PC-3 (cell line): ENCODE measurements at regions of chr4 and their contacts with region 1.

Region 1: DNA sequence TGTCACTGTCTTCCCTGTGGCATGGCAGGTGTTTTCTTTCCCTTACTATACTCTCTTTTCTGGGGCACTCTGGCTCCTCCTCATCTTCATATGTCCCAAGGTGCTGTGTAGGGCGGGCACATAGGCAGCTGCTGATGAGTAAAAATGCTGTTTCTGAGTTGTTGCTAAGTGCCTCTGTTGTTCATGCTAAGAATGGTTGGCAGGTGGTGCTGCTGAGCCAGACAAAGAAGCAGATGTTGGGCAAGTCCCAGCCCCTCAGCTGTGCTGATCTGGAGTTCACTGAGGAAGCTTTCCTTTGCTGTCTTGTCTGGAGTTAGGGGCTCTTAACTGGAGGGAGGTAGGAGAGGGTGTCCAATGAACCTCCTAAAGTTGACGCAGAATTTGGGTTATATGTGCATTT is 40.6 kb downstream of the HADH start:
- DNase-seq: peak; percentile 39
- ATAC-seq: peak; percentile 92
- H3K4me3 ChIP-seq: no peak overlapping the region
- H3K27ac ChIP-seq: no peak overlapping the region
- H3K4me1 ChIP-seq: no peaks in the 10 kb centered on the region
- H3K27me3 ChIP-seq: no peaks in the 10 kb centered on the region
- CTCF ChIP-seq: peak; percentile 60

Region 2: GRCh38 chr4:106594291-106594952 is 1435.9 kb before region 1 on chr4:
- CTCF ChIA-PET with region 1: no interaction called
- POLR2A ChIA-PET with region 1: no interaction called
- intact Hi-C with region 1: loop called (anchors 10 kb)
- DNase-seq: peak; percentile 11
- ATAC-seq: no peak
- H3K4me3 ChIP-seq: no peak overlapping the region
- H3K27ac ChIP-seq: no peak overlapping the region
- H3K4me1 ChIP-seq: no peaks in the 10 kb centered on the region
- H3K27me3 ChIP-seq: no peaks in the 10 kb centered on the region
- CTCF ChIP-seq: no peak

Region 3: DNA sequence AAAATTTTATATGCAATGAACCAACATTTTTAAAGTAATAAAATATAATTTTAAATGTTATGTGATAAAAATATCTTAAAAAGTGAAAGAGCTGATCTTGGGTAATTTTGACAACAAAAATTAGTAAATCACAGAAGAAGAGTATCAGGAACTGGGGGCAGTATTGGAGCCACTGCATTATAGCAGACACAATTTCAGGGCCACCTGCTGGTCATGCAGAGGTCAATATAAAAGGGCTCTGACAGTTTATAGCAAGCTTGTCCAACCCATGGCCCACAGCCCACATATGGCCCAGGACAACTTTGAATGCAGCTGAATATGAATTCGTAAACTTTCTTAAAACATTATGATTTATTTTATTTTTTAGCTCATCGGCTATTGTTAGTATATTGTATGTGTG is 151.4 kb after region 1 on chr4:
- CTCF ChIA-PET with region 1: no interaction called
- POLR2A ChIA-PET with region 1: no interaction called
- intact Hi-C with region 1: loop called (anchors 5 kb)
- DNase-seq: no peak
- ATAC-seq: peak; percentile 58
- H3K4me3 ChIP-seq: no peak overlapping the region
- H3K27ac ChIP-seq: no peak overlapping the region
- H3K4me1 ChIP-seq: no peaks in the 10 kb centered on the region
- H3K27me3 ChIP-seq: no peaks in the 10 kb centered on the region
- CTCF ChIP-seq: peak; percentile 35

Region 4: DNA sequence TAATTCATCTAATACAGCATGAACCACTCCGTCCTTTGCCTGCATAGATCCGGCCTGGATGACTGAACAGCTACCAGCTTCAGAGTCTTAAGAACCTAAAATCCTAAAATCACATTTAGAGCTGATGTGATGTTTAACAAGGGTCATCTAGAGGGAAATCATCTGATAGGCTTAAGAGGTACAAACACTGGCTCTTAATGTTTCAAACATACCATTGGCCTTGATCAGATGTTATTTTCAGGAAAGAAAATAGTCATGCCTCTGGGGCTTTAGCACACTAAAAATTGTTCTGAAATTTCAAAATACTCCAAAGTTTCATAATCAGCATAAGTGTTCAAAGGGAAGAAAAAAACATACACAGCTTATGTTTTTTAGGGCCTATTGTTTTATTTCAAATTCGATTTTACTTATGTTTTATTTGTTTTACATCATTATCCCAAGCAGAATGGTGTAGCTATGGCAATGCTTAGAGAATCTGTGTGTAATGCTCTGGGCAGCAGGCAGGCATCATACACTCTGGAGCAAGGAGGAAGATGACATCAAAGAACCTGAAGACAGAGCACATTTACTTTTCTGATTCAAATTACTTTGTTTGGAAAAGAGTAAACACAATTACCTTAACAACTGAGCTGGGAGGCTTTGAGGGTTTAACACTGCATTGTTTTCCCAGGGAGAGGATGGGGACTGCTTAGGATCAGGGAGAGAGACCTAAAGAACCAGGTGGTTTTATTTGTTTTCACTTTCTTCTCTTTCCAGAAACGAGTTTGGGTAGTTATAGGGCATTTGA is 163.7 kb after region 1 on chr4:
- CTCF ChIA-PET with region 1: no interaction called
- POLR2A ChIA-PET with region 1: no interaction called
- intact Hi-C with region 1: no loop called
- DNase-seq: no peak
- ATAC-seq: no peak
- H3K4me3 ChIP-seq: no peak overlapping the region
- H3K27ac ChIP-seq: no peak overlapping the region
- H3K4me1 ChIP-seq: no peaks in the 10 kb centered on the region
- H3K27me3 ChIP-seq: no peaks in the 10 kb centered on the region
- CTCF ChIP-seq: no peak

Region 5: GRCh38 chr4:108570993-108571569 is 540.7 kb after region 1 on chr4:
- CTCF ChIA-PET with region 1: interaction called, 6 read pairs
- POLR2A ChIA-PET with region 1: no interaction called
- intact Hi-C with region 1: loop called (anchors 1 kb)
- DNase-seq: no peak
- ATAC-seq: no peak
- H3K4me3 ChIP-seq: no peak overlapping the region
- H3K27ac ChIP-seq: no peak overlapping the region
- H3K4me1 ChIP-seq: no peaks in the 10 kb centered on the region
- H3K27me3 ChIP-seq: 0 out of 2 replicates have a peak, but pooled peaks cover 17% of the 10 kb centered on the region
- CTCF ChIP-seq: no peak